PC-9 (cell line): ENCODE measurements at regions of chr10 and their contacts with region 1.

Region 1: DNA sequence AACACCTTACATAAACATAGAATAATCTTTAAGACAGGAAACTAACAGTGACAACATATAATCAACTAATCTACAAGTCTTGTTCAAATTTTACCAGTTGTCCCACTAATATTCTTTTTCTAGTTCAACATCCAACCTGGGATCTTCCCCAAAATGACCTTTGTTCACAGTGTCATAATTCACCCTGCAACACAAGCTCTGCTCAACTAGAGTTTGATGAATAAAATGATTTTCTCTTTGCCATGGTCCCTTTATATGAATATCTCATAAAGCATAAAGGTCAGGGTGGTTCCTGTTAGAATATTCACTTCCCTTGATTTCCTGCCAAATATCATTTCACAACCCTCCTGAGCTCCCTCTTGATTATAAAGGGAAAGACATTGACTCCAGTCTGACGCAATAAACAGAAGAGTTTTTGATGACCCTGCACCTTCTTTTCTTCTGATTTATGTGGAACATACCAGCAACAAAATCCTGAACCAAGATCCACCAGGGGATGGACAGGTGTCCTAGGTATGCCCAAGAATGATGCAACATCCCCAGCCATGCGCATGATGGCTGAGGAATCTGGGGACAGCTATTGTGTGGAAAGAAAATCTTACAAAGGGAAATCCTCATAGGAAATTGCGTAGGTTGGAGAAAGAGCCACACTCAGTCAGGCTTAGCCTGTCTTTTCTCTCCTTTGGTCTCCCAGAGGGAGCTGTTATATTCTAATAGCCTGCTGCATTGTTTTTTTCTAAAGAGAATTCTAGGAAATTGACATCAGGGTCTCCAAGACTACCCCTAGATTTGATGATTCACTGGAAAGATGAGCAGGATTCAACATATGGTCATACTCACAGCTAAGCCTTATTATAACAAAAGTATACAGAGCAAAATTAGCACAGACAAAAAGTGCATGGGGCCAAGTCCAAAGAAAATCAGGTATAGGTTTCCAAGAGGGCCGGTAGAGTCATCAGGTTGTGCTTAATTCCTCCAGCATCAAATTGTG is 18.8 kb downstream of the IFIT3 start:
- DNase-seq: peak in 1 of 2 experiments; percentile 86
- H3K4me3 ChIP-seq: no peak overlapping the region
- H3K27ac ChIP-seq: peak overlapping the region; percentile 95
- H3K4me1 ChIP-seq: peaks cover 37% of the 10 kb centered on the region
- H3K27me3 ChIP-seq: no peaks in the 10 kb centered on the region
- CTCF ChIP-seq: no peak

Region 2: DNA sequence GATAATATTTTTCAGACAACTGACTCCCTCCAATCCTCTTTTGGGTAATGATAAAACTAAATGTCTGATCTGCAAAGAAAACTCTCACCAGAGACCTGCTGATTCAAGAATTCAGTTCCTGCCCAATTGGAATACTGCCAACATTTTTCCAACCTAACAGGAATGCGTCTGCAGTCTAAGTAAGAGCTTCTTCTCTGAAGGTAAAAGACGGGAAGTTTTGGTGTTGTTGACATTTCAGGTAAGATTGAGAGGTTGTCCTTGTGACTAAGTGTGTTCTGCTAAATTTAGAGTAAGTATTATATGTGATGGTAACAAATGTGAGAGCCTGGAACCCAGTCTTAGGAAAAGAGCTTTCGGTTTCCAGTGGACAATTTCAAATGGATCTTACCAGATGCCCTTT is 85.4 kb after region 1 on chr10:
- CTCF ChIA-PET with region 1: no interaction called
- POLR2A ChIA-PET with region 1: interaction called, 11 read pairs
- intact Hi-C with region 1: no loop called
- DNase-seq: peak in 1 of 2 experiments; percentile 44
- H3K4me3 ChIP-seq: no peak overlapping the region
- H3K27ac ChIP-seq: no peak overlapping the region
- H3K4me1 ChIP-seq: peaks cover 9% of the 10 kb centered on the region
- H3K27me3 ChIP-seq: no peaks in the 10 kb centered on the region
- CTCF ChIP-seq: no peak

Region 3: DNA sequence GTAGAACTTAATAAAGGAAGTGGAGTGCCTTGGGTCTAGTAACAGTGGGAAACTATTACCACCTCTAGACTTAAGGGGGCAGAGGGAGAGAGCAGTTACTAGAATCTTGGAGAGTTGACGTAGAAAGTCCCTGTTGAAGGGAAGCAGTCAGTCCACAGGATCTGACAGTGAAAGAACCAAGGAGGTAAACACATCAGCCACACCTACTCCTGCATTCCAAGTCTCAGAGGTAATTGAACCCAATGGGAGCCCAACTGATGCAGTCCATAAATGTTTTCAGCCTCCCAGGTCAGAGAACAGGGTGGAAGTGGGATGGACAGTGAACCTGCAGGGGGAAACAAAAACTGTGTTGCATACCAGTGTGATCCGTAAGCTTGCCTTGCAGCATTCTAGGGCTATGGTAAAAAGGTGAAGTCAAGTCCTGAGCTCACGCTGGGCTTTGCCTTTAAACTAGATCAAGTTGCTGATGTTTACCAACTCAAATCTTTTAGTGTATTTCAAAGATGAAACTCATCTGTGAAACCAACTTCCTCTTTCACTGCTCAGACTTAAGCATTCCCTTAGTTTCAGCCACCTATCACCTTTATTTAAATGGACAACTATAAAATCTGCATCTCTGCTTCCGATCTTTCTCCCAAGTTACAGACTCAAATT is 131.7 kb after region 1 on chr10:
- CTCF ChIA-PET with region 1: no interaction called
- POLR2A ChIA-PET with region 1: no interaction called
- intact Hi-C with region 1: no loop called
- DNase-seq: peak; percentile 36 to 60
- H3K4me3 ChIP-seq: no peak overlapping the region
- H3K27ac ChIP-seq: 0 out of 2 replicates have a peak overlapping the region, but pooled peaks have one; percentile 24
- H3K4me1 ChIP-seq: peaks cover 15% of the 10 kb centered on the region
- H3K27me3 ChIP-seq: no peaks in the 10 kb centered on the region
- CTCF ChIP-seq: no peak